Panc1 (cell line): ENCODE measurements at regions of chr1 and their contacts with region 1.

Region 1: GRCh38 chr1:33295450-33296081 is 25.3 kb downstream of the A3GALT2 start:
- DNase-seq: peak; percentile 81
- ATAC-seq: peak; percentile 94
- H3K4me3 ChIP-seq: no peak overlapping the region
- H3K27ac ChIP-seq: no peak overlapping the region
- H3K4me1 ChIP-seq: 0 out of 2 replicates have a peak, but pooled peaks cover 3% of the 10 kb centered on the region
- H3K27me3 ChIP-seq: no peaks in the 10 kb centered on the region
- CTCF ChIP-seq: peak; percentile 96

Region 2: GRCh38 chr1:32972814-32973428 is 322.6 kb before region 1 on chr1:
- CTCF ChIA-PET with region 1: no interaction called
- POLR2A ChIA-PET with region 1: no interaction called
- in situ Hi-C with region 1: no loop called
- intact Hi-C with region 1: no loop called
- DNase-seq: no peak
- ATAC-seq: peak; percentile 90
- H3K4me3 ChIP-seq: peak overlapping the region; percentile 53 to 66
- H3K27ac ChIP-seq: peak overlapping the region; percentile 48; the same call in 1 of the 2 replicates
- H3K4me1 ChIP-seq: no peaks in the 10 kb centered on the region
- H3K27me3 ChIP-seq: peaks cover 2% of the 10 kb centered on the region; the same call in 1 of the 2 replicates
- CTCF ChIP-seq: no peak

Region 3: GRCh38 chr1:33219881-33220661 is 75.5 kb before region 1 on chr1:
- CTCF ChIA-PET with region 1: interaction called, 3 read pairs
- POLR2A ChIA-PET with region 1: no interaction called
- in situ Hi-C with region 1: no loop called
- intact Hi-C with region 1: loop called (anchors 10 kb)
- DNase-seq: no peak
- ATAC-seq: peak; percentile 70
- H3K4me3 ChIP-seq: no peak overlapping the region
- H3K27ac ChIP-seq: no peak overlapping the region
- H3K4me1 ChIP-seq: no peaks in the 10 kb centered on the region; the same call in 1 of the 2 replicates
- H3K27me3 ChIP-seq: no peaks in the 10 kb centered on the region
- CTCF ChIP-seq: no peak

Region 4: GRCh38 chr1:33361532-33362235 is 66.1 kb after region 1 on chr1:
- CTCF ChIA-PET with region 1: interaction called, 20 read pairs
- POLR2A ChIA-PET with region 1: no interaction called
- in situ Hi-C with region 1: no loop called
- intact Hi-C with region 1: loop called (anchors 1 kb)
- DNase-seq: no peak
- ATAC-seq: no peak
- H3K4me3 ChIP-seq: no peak overlapping the region
- H3K27ac ChIP-seq: no peak overlapping the region
- H3K4me1 ChIP-seq: peaks cover 4% of the 10 kb centered on the region
- H3K27me3 ChIP-seq: no peaks in the 10 kb centered on the region
- CTCF ChIP-seq: no peak

Region 5: DNA sequence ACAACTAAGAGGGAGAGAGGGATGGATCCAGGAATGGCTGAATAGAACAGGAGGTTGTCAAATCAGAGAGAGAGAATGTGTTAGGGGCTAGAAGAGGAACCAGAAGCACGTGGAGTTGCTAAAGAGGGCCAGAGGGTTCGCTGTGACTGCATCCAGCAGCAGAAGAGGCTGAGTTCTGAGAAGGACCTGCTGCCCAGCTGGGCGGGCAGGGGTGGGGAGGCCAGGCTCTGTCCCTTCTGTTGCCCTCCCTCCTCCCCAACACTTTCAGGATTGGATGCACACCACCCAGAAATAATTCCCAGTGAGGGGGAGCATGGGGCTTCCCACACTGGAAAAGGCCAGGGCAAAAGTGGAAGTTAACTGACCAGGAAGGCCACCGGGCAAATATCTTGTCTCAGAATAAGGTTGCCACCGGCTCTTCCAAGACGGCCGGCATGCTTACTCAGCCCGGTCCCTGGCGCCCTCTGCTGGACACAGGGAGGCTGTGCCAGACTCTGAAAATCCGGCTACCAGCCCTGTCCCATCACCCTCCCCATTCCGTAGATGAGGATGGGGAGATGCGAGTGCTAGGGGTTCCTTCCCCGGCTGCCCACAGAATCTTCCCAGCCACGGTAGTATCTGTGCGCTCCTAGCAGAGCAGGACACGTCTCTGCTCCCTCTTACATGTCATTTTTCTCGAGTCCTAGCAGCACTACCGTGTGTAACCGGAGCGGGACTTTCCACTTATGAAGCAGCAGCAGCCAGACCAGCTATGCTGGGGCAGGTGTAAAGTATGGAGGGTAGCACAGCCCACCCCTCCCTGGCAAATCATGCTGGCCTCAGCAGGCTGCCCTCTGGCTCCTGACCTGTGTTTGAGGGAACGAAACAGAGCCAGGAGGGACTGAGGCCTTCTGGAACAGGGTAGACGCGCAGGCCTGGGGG is 72.2 kb after region 1 on chr1:
- CTCF ChIA-PET with region 1: interaction called, 20 read pairs
- POLR2A ChIA-PET with region 1: no interaction called
- in situ Hi-C with region 1: no loop called
- intact Hi-C with region 1: loop called (anchors 1 kb)
- DNase-seq: no peak
- ATAC-seq: peak; percentile 94
- H3K4me3 ChIP-seq: no peak overlapping the region
- H3K27ac ChIP-seq: 0 out of 2 replicates have a peak overlapping the region, but pooled peaks have one; percentile 34
- H3K4me1 ChIP-seq: peaks cover 12% of the 10 kb centered on the region
- H3K27me3 ChIP-seq: no peaks in the 10 kb centered on the region
- CTCF ChIP-seq: peak; percentile 97

Region 6: GRCh38 chr1:33455539-33456501 is 160.3 kb after region 1 on chr1:
- CTCF ChIA-PET with region 1: interaction called, 10 read pairs
- POLR2A ChIA-PET with region 1: no interaction called
- in situ Hi-C with region 1: no loop called
- intact Hi-C with region 1: loop called (anchors 5 kb)
- DNase-seq: peak; percentile 84
- ATAC-seq: peak; percentile 96
- H3K4me3 ChIP-seq: no peak overlapping the region
- H3K27ac ChIP-seq: no peak overlapping the region
- H3K4me1 ChIP-seq: no peaks in the 10 kb centered on the region
- H3K27me3 ChIP-seq: no peaks in the 10 kb centered on the region
- CTCF ChIP-seq: peak; percentile 88

Region 7: DNA sequence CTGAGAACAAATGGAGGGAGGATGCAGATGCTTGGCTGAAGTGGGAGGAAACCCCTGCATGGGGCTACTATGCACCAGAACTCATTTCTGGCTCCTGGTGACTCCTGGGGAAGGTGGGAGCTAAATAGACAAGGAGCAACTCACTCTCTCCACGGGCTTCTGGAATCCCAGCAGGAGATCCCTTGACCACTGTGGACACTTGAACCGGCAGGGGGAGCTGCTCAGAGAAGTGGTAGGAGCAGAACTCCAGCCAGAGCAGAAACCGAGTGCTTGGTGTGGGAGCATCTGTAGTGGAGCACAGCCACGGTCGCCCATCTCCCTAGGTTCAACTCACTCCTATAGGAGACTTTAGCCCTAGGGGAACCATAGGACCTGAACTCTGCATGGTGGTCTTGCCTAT is 1253.6 kb after region 1 on chr1:
- CTCF ChIA-PET with region 1: no interaction called
- POLR2A ChIA-PET with region 1: interaction called, 15 read pairs
- in situ Hi-C with region 1: no loop called
- intact Hi-C with region 1: no loop called
- DNase-seq: no peak
- ATAC-seq: peak; percentile 48; the same call in 1 of the 2 replicates
- H3K4me3 ChIP-seq: no peak overlapping the region
- H3K27ac ChIP-seq: no peak overlapping the region
- H3K4me1 ChIP-seq: no peaks in the 10 kb centered on the region
- H3K27me3 ChIP-seq: no peaks in the 10 kb centered on the region
- CTCF ChIP-seq: peak; percentile 41